ENCODE measurements at regions of chr5 and their contacts with region 1.

Region 1: DNA sequence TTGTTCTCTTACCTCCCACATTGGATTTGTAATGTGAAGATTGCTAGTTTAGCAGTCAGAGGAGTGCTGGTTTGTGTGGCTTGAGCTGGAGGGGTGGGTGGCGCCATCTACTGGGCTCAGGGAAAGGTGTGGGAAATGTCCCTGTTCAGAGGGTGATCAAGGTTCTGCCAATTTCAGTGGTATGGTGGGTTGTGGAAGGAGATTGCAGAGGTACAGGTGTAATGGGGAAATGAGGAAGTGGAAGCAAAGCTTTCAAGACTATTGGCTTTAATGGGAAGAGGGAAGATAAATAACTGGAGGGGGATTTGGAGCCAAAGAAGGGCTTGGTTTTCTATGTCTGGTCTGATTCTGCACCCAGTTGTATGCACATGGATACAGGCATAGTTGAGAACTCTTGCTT is 76.4 kb downstream of the OSMR start:
- DNase-seq: peak; percentile 55
- H3K4me3 ChIP-seq: no peak overlapping the region
- H3K27ac ChIP-seq: no peak overlapping the region
- H3K4me1 ChIP-seq: no peaks in the 10 kb centered on the region
- H3K27me3 ChIP-seq: no peaks in the 10 kb centered on the region
- CTCF ChIP-seq: peak; percentile 31 to 70 (median 62)
- POLR2A ChIP-seq: no peak

Region 2: GRCh38 chr5:38189081-38189521 is 733.1 kb before region 1 on chr5:
- intact Hi-C with region 1: no loop called
- DNase-seq: no peak
- H3K4me3 ChIP-seq: no peak overlapping the region
- H3K27ac ChIP-seq: no peak overlapping the region
- H3K4me1 ChIP-seq: no peaks in the 10 kb centered on the region
- H3K27me3 ChIP-seq: no peaks in the 10 kb centered on the region
- CTCF ChIP-seq: no peak
- POLR2A ChIP-seq: no peak

Region 3: DNA sequence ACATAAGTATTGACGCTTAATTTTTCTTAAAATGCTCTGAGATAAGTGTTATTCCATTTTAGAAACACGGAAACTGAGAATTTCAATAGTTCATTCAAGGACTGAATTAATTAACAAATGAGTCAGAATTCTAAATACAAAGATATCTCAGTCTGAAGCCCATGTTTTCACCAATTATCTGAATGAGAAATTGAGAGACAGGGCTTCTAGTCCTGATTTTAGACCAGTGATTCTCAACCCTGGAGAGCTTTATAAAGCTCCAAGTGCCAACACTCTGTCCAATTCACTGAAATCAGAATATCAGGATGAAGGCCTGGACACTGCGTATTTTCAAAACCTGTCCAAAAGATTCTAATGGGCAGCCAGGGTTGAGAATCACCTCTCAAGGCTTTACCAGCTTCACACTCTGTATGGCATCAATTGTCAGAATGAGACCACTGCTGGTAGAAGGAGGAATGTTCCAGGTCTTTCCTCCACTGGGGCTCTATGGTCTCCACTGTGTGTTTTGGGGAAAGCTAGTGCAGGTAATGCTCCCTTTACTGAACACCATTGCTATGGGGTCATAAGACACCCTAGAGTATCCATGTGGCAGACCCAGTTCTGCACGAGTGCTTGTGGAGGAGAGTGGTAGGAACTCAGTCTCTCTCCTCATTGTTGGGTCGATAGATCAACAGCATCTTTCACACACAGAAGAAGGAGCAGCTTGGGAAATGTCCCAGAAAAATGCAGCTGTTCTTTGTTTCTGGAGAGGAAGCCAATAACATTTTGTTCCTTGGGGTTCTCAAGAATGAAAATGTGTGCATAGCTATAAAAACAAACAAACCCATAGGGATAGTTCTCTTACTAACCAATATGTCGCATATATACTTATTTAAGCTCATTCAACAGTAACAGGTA is 176.1 kb before region 1 on chr5:
- intact Hi-C with region 1: no loop called
- DNase-seq: no peak
- H3K4me3 ChIP-seq: no peak overlapping the region
- H3K27ac ChIP-seq: no peak overlapping the region
- H3K4me1 ChIP-seq: no peaks in the 10 kb centered on the region
- H3K27me3 ChIP-seq: no peaks in the 10 kb centered on the region
- CTCF ChIP-seq: no peak
- POLR2A ChIP-seq: no peak

Region 4: GRCh38 chr5:38831909-38832308 is 90.3 kb before region 1 on chr5:
- intact Hi-C with region 1: loop called (anchors 5 kb)
- DNase-seq: no peak
- H3K4me3 ChIP-seq: no peak overlapping the region
- H3K27ac ChIP-seq: no peak overlapping the region
- H3K4me1 ChIP-seq: no peaks in the 10 kb centered on the region
- H3K27me3 ChIP-seq: no peaks in the 10 kb centered on the region
- CTCF ChIP-seq: peak in 1 of 4 experiments; percentile 14
- POLR2A ChIP-seq: no peak